Activated CD4-positive, alpha-beta T cell treated with anti-CD3 and anti-CD28 coated beads for 36 hours (primary cell): ENCODE measurements at regions of chr12 and their contacts with region 1.

Region 1: GRCh38 chr12:123633379-123634141 is at the starts of genes EIF2B1 and GTF2H3:
- DNase-seq: peak; percentile 99
- ATAC-seq: peak; percentile 97
- H3K4me3 Mint-ChIP-seq: peak within 1 kb of the TSS; percentile 93
- H3K27ac Mint-ChIP-seq: peak within 1 kb of the TSS; percentile 96
- H3K4me1 Mint-ChIP-seq: peaks cover 19% of the 10 kb centered on the region
- H3K27me3 Mint-ChIP-seq: no peaks in the 10 kb centered on the region
- total RNA-seq, gene EIF2B1: 52.7 to 61.0 TPM
- total RNA-seq, gene GTF2H3: 60.4 to 77.1 TPM

Region 2: GRCh38 chr12:123271001-123271729 is 362.4 kb before region 1 on chr12:
- CTCF ChIA-PET with region 1: no interaction called
- POLR2A ChIA-PET with region 1: no interaction called
- intact Hi-C with region 1: loop called in 1 of 2 experiments (anchors 2 kb)
- DNase-seq: peak; percentile 90
- ATAC-seq: peak; percentile 75
- H3K4me3 Mint-ChIP-seq: peak overlapping the region; percentile 86
- H3K27ac Mint-ChIP-seq: no peak overlapping the region
- H3K4me1 Mint-ChIP-seq: peaks cover 23% of the 10 kb centered on the region
- H3K27me3 Mint-ChIP-seq: no peaks in the 10 kb centered on the region

Region 3: DNA sequence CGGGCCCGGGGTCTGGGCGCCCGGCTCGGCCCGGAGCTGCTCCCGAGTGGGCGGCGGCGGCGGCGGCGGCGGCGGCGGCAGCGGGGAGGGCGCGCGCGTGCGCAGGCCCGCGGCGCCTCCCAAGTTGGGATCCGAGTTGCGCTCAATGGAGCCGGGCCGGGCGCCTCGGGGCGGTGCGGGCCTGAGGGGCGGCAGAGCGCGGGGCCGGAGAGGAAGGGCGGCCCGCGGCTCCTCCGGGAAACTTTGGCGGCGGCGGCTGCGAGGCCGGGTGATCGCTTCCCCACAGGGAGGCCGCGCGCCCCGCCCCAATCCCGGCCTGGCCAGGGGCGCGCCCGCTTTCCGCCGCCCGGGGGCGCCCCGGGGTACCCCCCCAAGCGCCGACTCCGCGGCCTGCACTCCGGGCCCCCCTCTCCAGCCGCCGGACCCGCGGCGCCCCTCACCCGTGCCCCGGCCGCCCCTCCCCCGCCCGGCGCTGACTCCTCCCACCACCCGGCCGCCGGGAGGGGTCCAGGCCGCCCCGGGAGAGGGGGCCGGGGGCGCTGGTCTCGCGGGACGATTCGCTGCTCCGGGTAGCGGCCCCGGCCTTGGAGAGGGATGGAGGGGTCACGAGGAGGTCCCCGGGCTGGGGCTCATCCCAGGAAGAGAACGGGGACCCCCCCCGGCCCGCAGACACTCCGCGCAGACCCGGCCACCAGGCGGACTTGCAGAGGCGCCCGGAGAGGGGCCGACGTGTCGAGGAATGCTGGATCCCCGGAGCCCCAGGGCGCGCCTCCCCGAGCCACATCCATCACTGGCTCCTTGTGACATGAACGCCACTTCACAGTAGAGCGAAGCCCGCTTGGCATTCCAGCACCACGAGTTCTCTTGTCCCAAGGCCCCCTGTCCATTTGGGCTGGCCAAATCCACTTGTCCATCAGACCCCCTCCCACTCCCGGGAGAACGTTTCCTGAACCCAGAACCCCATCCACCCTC is 99.6 kb before region 1 on chr12 and contains the start of gene RILPL1:
- CTCF ChIA-PET with region 1: no interaction called
- POLR2A ChIA-PET with region 1: no interaction called
- intact Hi-C with region 1: loop called in 1 of 2 experiments (anchors 2 kb)
- DNase-seq: peak; percentile 63
- ATAC-seq: peak; percentile 64
- H3K4me3 Mint-ChIP-seq: peak within 1 kb of the TSS; percentile 78
- H3K27ac Mint-ChIP-seq: peak within 1 kb of the TSS; percentile 74
- H3K4me1 Mint-ChIP-seq: peaks cover 23% of the 10 kb centered on the region
- H3K27me3 Mint-ChIP-seq: peaks cover 3% of the 10 kb centered on the region
- total RNA-seq, gene RILPL1: 4.7 to 5.3 TPM

Region 4: DNA sequence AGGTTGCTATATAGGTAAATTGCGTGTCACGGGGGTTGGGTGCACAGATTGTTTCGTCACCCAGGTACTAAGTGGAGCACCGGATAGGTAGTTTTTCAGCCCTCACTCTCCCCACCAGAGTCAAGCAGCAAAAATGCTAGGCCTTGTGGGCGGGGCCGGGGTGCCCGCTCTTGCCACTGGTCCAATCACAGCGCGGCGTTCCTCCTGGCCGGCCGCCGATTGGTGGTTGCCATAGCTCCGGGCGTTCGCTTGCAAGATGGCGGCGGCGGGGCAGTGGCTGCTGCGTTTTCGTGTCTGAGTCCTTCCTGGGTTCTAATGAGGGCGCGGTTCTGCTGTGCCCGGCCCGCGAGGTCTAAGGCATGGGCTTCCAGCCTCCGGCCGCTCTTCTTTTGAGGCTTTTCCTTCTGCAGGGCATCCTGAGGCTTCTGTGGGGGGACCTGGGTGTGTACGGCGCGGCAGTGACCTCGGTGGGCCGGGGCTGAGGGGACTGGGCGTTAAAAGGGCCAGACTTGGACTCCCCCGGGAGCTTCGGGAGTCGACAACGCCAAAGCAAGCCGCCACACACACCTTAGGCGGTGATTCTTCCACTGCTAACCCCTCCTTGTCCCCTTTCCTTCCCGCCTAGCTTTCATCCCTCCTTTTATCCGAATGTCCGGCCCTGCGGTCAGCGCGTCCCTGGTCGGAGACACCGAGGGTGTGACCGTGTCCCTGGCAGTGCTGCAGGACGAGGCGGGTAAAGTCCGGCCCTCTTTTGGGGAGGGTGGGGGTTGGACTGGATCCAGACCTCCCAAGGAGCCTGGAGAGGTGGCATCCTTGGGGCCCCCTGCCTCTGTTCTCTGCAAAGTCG is 37.5 kb after region 1 on chr12 and contains the start of gene TCTN2:
- CTCF ChIA-PET with region 1: no interaction called
- POLR2A ChIA-PET with region 1: interaction called, 6 read pairs
- intact Hi-C with region 1: loop called in 1 of 2 experiments (anchors 1 kb)
- DNase-seq: peak; percentile 98
- ATAC-seq: peak; percentile 100
- H3K4me3 Mint-ChIP-seq: peak within 1 kb of the TSS; percentile 78
- H3K27ac Mint-ChIP-seq: peak within 1 kb of the TSS; percentile 25
- H3K4me1 Mint-ChIP-seq: peaks cover 15% of the 10 kb centered on the region
- H3K27me3 Mint-ChIP-seq: no peaks in the 10 kb centered on the region
- total RNA-seq, gene TCTN2: 4.4 to 4.5 TPM